Activated CD4-positive, alpha-beta memory T cell treated with anti-CD3 and anti-CD28 coated beads for 36 hours (primary cell): ENCODE measurements at regions of chr5 and their contacts with region 1.

Region 1: DNA sequence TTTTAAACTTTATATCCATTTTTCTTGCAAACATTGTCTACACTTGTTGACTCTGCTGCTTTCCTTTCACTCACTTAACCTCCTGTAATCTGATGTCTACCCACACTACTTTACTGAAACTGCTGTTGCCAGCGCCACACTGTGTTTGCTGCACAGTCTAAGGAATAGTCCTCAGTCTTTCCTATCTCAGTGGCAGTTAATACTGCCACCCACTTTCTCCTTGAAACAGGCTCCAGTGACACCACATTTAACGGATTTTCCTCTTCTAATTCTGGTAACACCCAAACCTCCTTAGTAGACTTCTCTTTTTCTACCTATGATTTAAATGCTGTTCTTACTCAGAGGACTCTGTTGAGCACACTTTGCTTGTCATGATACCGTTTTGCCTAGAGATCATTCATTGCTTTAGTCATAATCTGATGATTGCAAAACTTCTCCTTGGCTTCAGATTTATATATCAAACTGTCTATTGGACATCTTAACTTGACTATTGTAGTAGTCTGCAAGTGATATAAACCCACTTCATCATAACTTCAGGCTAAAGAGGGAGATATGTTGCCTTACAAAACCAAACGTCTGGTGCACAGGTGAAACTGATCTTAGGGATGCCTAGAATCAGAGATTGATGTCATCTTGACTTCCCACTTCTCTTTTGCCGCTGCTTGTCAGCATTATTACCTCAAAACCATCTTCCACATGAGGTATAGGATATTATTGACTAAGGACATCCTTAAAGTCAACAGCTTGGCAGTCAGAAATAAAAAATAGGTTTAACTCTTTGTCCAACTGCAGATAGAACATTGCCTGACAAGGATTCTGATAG is 94.1 kb downstream of the CDC42SE2 start:
- DNase-seq: peak; percentile 72
- H3K4me3 Mint-ChIP-seq: peak overlapping the region; percentile 66
- H3K27ac Mint-ChIP-seq: peak overlapping the region; percentile 97
- H3K4me1 Mint-ChIP-seq: peaks cover 64% of the 10 kb centered on the region
- H3K27me3 Mint-ChIP-seq: no peaks in the 10 kb centered on the region

Region 2: GRCh38 chr5:131224387-131225201 is 133.4 kb before region 1 on chr5:
- CTCF ChIA-PET with region 1: no interaction called
- POLR2A ChIA-PET with region 1: no interaction called
- intact Hi-C with region 1: loop called (anchors 1 kb)
- DNase-seq: peak; percentile 34
- H3K4me3 Mint-ChIP-seq: no peak overlapping the region
- H3K27ac Mint-ChIP-seq: no peak overlapping the region
- H3K4me1 Mint-ChIP-seq: peaks cover 12% of the 10 kb centered on the region
- H3K27me3 Mint-ChIP-seq: no peaks in the 10 kb centered on the region

Region 3: GRCh38 chr5:131272307-131272706 is 85.6 kb before region 1 on chr5:
- CTCF ChIA-PET with region 1: interaction called, 5 read pairs
- POLR2A ChIA-PET with region 1: no interaction called
- intact Hi-C with region 1: loop called (anchors 2 kb)
- DNase-seq: no peak
- H3K4me3 Mint-ChIP-seq: peak overlapping the region; percentile 77
- H3K27ac Mint-ChIP-seq: peak overlapping the region; percentile 96
- H3K4me1 Mint-ChIP-seq: peaks cover 75% of the 10 kb centered on the region
- H3K27me3 Mint-ChIP-seq: no peaks in the 10 kb centered on the region

Region 4: GRCh38 chr5:131289738-131290137 is 68.2 kb before region 1 on chr5:
- CTCF ChIA-PET with region 1: no interaction called
- POLR2A ChIA-PET with region 1: interaction called, 4 read pairs
- intact Hi-C with region 1: loop called (anchors 2 kb)
- DNase-seq: peak; percentile 62
- H3K4me3 Mint-ChIP-seq: peak overlapping the region; percentile 75
- H3K27ac Mint-ChIP-seq: peak overlapping the region; percentile 97
- H3K4me1 Mint-ChIP-seq: peaks cover 69% of the 10 kb centered on the region
- H3K27me3 Mint-ChIP-seq: no peaks in the 10 kb centered on the region

Region 5: GRCh38 chr5:131328536-131329285 is 29.2 kb before region 1 on chr5:
- CTCF ChIA-PET with region 1: no interaction called
- POLR2A ChIA-PET with region 1: no interaction called
- intact Hi-C with region 1: loop called (anchors 1 kb)
- DNase-seq: no peak
- H3K4me3 Mint-ChIP-seq: no peak overlapping the region
- H3K27ac Mint-ChIP-seq: peak overlapping the region; percentile 78
- H3K4me1 Mint-ChIP-seq: peaks cover 62% of the 10 kb centered on the region
- H3K27me3 Mint-ChIP-seq: no peaks in the 10 kb centered on the region

Region 6: DNA sequence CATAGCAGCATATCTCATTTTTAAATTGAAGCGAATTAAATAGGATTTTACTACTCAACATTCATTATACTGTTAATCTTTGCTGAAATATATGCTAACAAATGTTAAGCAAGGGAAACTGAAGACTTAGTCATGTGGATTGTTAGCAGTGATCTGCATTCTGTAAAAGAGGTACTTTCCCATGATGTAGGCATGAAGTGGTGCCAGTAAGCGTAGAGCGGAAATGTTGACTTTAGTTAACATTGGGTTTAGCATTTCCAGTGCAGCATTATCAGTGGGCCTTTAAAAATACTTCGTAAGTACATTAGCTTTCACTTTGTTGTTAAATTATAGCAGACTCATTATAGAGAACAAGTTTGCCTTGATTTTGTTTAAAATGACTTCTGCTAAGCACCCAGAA is 36.2 kb after region 1 on chr5:
- CTCF ChIA-PET with region 1: no interaction called
- POLR2A ChIA-PET with region 1: interaction called, 3 read pairs
- intact Hi-C with region 1: loop called (anchors 1 kb)
- DNase-seq: peak; percentile 69
- H3K4me3 Mint-ChIP-seq: peak overlapping the region; percentile 66
- H3K27ac Mint-ChIP-seq: peak overlapping the region; percentile 93
- H3K4me1 Mint-ChIP-seq: peaks cover 86% of the 10 kb centered on the region
- H3K27me3 Mint-ChIP-seq: no peaks in the 10 kb centered on the region